MCF 10A (cell line): ENCODE measurements at regions of chr1 and their contacts with region 1.

Region 1: DNA sequence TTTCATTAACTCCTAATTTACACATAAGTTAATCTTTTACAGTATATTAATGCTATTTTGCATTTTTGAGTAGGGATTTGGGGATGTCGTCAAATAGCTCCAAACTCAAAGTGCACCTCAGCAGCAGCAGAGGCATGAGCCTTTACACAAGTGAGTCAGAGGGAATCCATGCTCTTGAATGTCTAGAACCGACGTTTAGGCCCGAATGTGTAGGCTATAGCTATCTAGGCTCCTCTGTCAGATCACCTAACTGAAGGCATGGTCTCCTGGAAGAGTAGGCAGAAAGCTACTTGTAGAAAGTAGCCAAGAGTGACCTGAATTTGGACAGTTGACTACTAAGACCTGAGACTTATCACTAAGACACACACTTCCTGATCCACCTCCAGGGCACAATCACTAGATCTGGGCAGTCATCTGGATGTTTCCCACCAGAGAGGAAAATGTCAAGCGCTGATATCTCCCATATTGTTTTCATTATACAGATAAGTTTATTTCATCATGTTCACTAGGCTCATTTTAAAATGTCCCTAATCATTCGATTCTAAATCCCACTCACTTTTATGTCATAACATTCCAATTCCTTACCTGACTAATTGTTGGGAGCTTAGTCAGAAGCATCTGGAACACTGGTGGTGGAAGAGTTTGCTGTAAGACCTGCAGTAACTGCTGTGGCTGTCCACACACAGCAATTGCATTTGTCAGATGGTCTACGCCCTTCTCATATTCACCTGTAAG is 15.3 kb downstream of the TOMM20 start:
- DNase-seq: no peak
- H3K4me3 Mint-ChIP-seq: no peak overlapping the region
- H3K27ac Mint-ChIP-seq: no peak overlapping the region
- H3K4me1 Mint-ChIP-seq: peaks cover 17% of the 10 kb centered on the region
- H3K27me3 Mint-ChIP-seq: no peaks in the 10 kb centered on the region
- CTCF ChIP-seq: no peak

Region 2: GRCh38 chr1:235128456-235129328 is 15.3 kb after region 1 on chr1 and contains the start of gene TOMM20:
- CTCF ChIA-PET with region 1: interaction called, 26 read pairs
- POLR2A ChIA-PET with region 1: interaction called, 149 read pairs
- intact Hi-C with region 1: no loop called
- DNase-seq: peak; percentile 100
- H3K4me3 Mint-ChIP-seq: peak within 1 kb of the TSS; percentile 100
- H3K27ac Mint-ChIP-seq: peak within 1 kb of the TSS; percentile 99
- H3K4me1 Mint-ChIP-seq: peaks cover 23% of the 10 kb centered on the region
- H3K27me3 Mint-ChIP-seq: no peaks in the 10 kb centered on the region
- CTCF ChIP-seq: no peak
- total RNA-seq, gene TOMM20: 309 and 339 TPM in 2 replicates